Caco-2 (cell line): ENCODE measurements at regions of chr19 and their contacts with region 1.

Region 1: DNA sequence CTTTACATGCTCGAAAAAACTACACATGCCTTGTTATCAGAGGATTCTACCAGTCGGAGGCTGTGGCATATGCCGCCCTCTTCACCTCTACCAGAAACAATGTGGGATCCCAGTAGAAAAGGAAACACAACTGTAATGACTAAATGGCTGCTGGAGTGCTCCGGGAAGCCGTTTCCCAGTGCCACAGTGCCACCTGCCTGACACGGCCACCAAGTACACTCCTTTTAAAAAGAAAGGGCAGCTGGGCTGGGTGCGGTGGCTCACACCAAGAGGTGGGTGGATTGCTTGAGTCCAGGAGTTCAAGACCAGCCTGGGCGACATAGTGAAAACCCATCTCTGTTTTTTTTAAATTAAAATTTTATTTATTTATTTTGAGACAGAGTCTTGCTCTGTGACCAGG is 67.3 kb downstream of the TRPM4 start:
- DNase-seq: peak; percentile 71 to 72
- H3K4me3 ChIP-seq: no peak overlapping the region
- H3K4me3 Mint-ChIP-seq: no peak overlapping the region
- H3K27ac Mint-ChIP-seq: no peak overlapping the region
- H3K4me1 ChIP-seq: no peaks in the 10 kb centered on the region
- H3K4me1 Mint-ChIP-seq: peaks cover 7% of the 10 kb centered on the region
- H3K27me3 ChIP-seq: no peaks in the 10 kb centered on the region
- H3K27me3 Mint-ChIP-seq: no peaks in the 10 kb centered on the region
- CTCF ChIP-seq: peak in 1 of 2 experiments; percentile 49

Region 2: GRCh38 chr19:49182848-49183344 is 42.0 kb before region 1 on chr19:
- CTCF ChIA-PET with region 1: no interaction called
- POLR2A ChIA-PET with region 1: no interaction called
- intact Hi-C with region 1: no loop called
- DNase-seq: no peak
- H3K4me3 ChIP-seq: no peak overlapping the region
- H3K4me3 Mint-ChIP-seq: no peak overlapping the region
- H3K27ac Mint-ChIP-seq: no peak overlapping the region
- H3K4me1 ChIP-seq: no peaks in the 10 kb centered on the region
- H3K4me1 Mint-ChIP-seq: no peaks in the 10 kb centered on the region
- H3K27me3 ChIP-seq: no peaks in the 10 kb centered on the region
- H3K27me3 Mint-ChIP-seq: no peaks in the 10 kb centered on the region
- CTCF ChIP-seq: no peak

Region 3: DNA sequence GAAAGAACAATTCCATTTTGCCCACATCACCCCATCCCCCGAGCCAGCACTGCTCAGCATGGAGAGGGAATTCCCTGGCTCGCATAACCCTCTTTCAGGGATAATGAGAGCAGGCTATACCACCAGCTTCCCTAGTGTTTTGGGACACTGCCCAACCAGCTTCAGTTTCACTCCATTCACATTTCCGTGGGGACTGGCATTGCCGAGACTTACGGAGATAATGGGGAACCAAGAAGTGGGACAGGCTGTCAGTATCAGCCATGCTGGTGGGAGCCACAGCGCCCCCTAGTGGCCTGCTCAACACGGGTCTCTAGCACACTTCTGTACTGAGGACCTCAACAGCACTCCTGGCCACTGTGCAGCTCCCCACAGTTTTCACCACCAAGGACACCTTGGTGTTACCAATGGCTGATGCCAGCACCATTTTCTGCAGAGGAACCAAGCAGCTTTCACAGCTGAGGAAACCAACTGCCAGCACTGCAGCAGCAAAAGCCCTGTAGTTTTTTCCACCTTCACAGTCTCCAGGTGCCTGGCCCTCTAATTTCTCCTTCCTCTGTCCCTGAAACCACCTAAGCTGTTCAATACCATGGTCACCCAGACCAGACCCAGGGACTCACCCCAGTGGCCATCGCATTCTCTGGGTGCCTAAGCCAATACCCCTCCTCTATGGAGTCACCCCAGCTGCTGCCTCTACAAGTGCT is 76.5 kb after region 1 on chr19:
- CTCF ChIA-PET with region 1: no interaction called
- POLR2A ChIA-PET with region 1: no interaction called
- intact Hi-C with region 1: loop called (anchors 1 kb)
- DNase-seq: peak; percentile 72 to 78
- H3K4me3 ChIP-seq: no peak overlapping the region
- H3K4me3 Mint-ChIP-seq: no peak overlapping the region
- H3K27ac Mint-ChIP-seq: no peak overlapping the region
- H3K4me1 ChIP-seq: no peaks in the 10 kb centered on the region
- H3K4me1 Mint-ChIP-seq: no peaks in the 10 kb centered on the region
- H3K27me3 ChIP-seq: no peaks in the 10 kb centered on the region
- H3K27me3 Mint-ChIP-seq: peaks cover 2% of the 10 kb centered on the region
- CTCF ChIP-seq: peak; percentile 87

Region 4: GRCh38 chr19:49327878-49328544 is 103.2 kb after region 1 on chr19:
- CTCF ChIA-PET with region 1: no interaction called
- POLR2A ChIA-PET with region 1: no interaction called
- intact Hi-C with region 1: loop called (anchors 1 kb)
- DNase-seq: peak; percentile 35 to 47
- H3K4me3 ChIP-seq: no peak overlapping the region
- H3K4me3 Mint-ChIP-seq: no peak overlapping the region
- H3K27ac Mint-ChIP-seq: no peak overlapping the region
- H3K4me1 ChIP-seq: no peaks in the 10 kb centered on the region
- H3K4me1 Mint-ChIP-seq: no peaks in the 10 kb centered on the region
- H3K27me3 ChIP-seq: no peaks in the 10 kb centered on the region
- H3K27me3 Mint-ChIP-seq: no peaks in the 10 kb centered on the region
- CTCF ChIP-seq: peak; percentile 64 to 74

Region 5: DNA sequence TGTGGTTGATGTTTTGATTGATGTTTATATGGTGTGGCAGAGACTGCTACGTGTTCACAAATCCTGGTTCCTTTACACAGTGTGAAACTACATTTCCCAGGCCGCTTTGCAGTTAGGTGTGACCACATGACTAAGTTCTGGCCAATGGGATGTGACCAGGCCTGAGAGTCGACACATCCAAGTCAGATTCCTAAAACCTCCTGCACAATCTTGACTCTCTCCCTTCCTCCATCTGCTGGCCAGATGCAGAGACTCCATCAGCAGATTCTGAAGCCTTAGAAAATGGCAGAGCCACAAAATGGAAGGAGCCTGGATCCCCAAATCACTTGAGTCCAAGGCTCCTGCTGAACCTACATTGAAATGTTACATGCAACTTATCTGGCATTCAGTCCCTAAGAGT is 123.0 kb after region 1 on chr19:
- CTCF ChIA-PET with region 1: no interaction called
- POLR2A ChIA-PET with region 1: no interaction called
- intact Hi-C with region 1: loop called (anchors 1 kb)
- DNase-seq: peak; percentile 74 to 84
- H3K4me3 ChIP-seq: no peak overlapping the region
- H3K4me3 Mint-ChIP-seq: no peak overlapping the region
- H3K27ac Mint-ChIP-seq: no peak overlapping the region
- H3K4me1 ChIP-seq: no peaks in the 10 kb centered on the region
- H3K4me1 Mint-ChIP-seq: no peaks in the 10 kb centered on the region
- H3K27me3 ChIP-seq: no peaks in the 10 kb centered on the region
- H3K27me3 Mint-ChIP-seq: no peaks in the 10 kb centered on the region
- CTCF ChIP-seq: peak; percentile 14 to 35

Region 6: DNA sequence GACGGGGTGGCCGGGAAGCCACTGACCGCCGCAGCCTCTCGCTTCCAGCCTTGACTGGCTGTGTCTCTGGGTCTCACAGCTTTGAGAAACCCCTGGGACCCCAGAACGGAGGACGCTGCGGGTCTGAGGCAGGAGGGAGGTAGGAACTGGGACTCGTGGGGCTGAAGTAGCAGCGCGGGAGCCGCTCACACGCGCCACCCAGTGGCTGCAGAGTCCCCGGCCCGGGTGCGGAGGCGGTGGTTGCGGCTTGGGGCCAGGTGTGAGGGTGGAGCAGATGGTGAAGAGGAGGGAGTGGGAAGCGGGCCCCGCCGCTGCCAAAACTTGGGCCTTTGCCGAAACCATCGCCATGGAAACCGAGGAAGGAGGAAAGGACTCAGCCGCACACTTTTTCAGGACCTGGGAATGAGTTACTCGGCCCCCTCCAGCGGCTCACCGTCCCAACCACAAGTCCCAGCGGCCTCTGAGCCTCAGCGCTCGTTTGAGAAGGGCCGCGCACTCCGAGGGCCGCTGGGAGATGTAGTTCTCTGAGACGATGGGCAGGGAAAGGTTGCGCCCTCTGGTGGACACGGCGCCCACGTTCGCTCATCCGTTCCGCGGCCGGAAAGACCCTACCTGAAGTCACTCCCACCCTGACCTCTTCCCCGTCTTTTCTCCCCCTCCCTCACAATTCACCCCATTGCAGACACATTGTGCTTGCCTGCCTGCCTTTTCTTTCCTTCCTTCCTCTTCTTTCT is 218.7 kb after region 1 on chr19:
- CTCF ChIA-PET with region 1: no interaction called
- POLR2A ChIA-PET with region 1: no interaction called
- intact Hi-C with region 1: loop called (anchors 1 kb)
- DNase-seq: peak; percentile 95 to 96
- H3K4me3 ChIP-seq: peak overlapping the region; percentile 65
- H3K4me3 Mint-ChIP-seq: peak overlapping the region; percentile 79
- H3K27ac Mint-ChIP-seq: peak overlapping the region; percentile 46
- H3K4me1 ChIP-seq: 0 out of 2 replicates have a peak, but pooled peaks cover 3% of the 10 kb centered on the region
- H3K4me1 Mint-ChIP-seq: peaks cover 23% of the 10 kb centered on the region
- H3K27me3 ChIP-seq: peaks cover 6% of the 10 kb centered on the region
- H3K27me3 Mint-ChIP-seq: peaks cover 29% of the 10 kb centered on the region
- CTCF ChIP-seq: peak; percentile 86 to 94